Aorta (tissue), 5 donors: ENCODE measurements at regions of chr12 and their contacts with region 1.

Region 1: GRCh38 chr12:59113831-59114615 is 193.7 kb upstream of the LRIG3 start:
- DNase-seq: peak; percentile 81 to 91
- ATAC-seq: peak; percentile 91
- H3K4me3 ChIP-seq: no peak overlapping the region
- H3K27ac ChIP-seq: no peak overlapping the region
- H3K4me1 ChIP-seq: peaks cover 2% of the 10 kb centered on the region in 2 donors
- H3K27me3 ChIP-seq: no peaks in the 10 kb centered on the region

Region 2: DNA sequence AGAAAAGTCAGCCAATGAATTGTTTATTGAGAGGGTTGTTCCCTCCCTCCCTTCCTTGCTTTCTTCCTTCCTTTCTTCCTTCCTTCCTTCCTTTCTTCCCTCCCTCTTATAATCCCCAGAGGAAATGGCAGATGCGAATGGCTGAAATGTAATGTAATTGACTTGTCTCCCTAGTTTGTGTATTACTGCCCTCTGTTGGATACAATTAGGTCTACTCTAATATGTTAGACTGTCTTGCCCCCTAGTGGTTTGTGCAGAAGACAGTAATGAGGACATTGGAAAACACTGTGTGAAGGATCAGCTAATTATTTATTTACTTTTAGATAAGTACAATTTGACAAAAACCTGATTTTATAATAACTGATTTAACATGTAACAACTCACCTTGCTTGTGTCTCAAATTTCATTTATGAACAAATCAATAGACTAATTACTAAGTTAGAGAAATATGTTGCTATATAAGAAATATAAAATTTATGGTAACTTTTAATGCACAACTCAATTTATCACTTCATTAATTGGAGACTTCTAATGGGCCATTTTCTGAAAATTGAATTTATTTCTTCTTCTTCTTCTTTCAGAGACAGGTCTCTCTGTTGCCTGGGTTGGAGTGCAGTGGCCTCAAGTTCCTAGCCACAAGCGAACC is 36.1 kb after region 1 on chr12:
- intact Hi-C with region 1: loop called (anchors 1 to 2 kb)
- DNase-seq: no peak
- ATAC-seq: peak; percentile 95
- H3K4me3 ChIP-seq: no peak overlapping the region
- H3K27ac ChIP-seq: no peak overlapping the region
- H3K4me1 ChIP-seq: no peaks in the 10 kb centered on the region
- H3K27me3 ChIP-seq: no peaks in the 10 kb centered on the region

Region 3: GRCh38 chr12:59164991-59165718 is 51.1 kb after region 1 on chr12:
- intact Hi-C with region 1: loop called (anchors 2 to 5 kb)
- DNase-seq: no peak
- ATAC-seq: no peak
- H3K4me3 ChIP-seq: no peak overlapping the region
- H3K27ac ChIP-seq: no peak overlapping the region
- H3K4me1 ChIP-seq: no peaks in the 10 kb centered on the region
- H3K27me3 ChIP-seq: no peaks in the 10 kb centered on the region

Region 4: GRCh38 chr12:59240048-59240447 is 126.0 kb after region 1 on chr12:
- intact Hi-C with region 1: no loop called
- DNase-seq: no peak
- ATAC-seq: no peak
- H3K4me3 ChIP-seq: no peak overlapping the region
- H3K27ac ChIP-seq: no peak overlapping the region
- H3K4me1 ChIP-seq: no peaks in the 10 kb centered on the region
- H3K27me3 ChIP-seq: no peaks in the 10 kb centered on the region

Region 5: GRCh38 chr12:59298296-59298695 is 184.3 kb after region 1 on chr12:
- intact Hi-C with region 1: no loop called
- DNase-seq: no peak
- ATAC-seq: no peak
- H3K4me3 ChIP-seq: no peak overlapping the region
- H3K27ac ChIP-seq: no peak overlapping the region
- H3K4me1 ChIP-seq: no peaks in the 10 kb centered on the region
- H3K27me3 ChIP-seq: no peaks in the 10 kb centered on the region